ENCODE measurements at regions of chr16 and their contacts with region 1.

Region 1: DNA sequence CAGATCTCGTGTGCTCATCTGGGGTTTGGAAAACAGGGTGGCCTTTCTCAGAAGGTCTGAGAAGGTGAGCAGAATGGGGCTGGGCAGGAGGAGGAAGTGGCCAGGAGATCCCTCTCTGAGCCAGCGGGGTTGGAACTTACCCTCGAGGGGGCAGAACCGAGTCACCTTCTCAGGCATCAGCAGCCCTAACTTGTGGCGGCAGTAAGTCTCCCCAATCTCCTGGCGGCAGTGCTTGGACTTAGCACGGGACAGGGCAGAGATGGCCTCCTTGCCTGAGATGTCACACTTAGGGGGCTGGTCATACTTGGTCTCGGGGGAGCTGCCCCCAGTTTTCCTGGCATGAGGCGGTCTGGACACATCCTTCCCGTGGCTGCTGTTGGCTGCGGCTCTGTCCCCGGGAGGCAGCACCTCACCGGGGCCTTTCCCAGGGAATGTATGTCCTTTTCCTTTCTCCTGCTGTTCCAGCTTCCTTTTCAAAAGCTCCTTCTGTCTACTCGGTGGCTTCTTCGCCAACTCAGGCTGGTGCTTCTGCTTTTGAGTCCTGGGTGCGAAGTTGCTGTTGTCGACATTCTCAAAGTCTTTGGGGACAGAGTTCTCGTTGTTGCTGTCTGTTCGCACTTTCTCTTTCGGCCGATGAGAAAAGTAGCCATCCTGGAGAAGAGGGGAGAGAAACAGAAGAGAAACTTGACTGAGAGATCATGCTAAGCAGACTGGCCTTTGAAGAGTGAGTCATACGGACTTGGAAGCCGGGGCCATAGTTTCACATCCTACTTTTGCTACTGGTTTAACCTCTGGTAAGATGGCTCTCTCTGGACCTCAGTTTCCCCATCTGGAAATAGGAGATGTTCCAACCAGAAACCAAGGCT is 211.7 kb downstream of the XYLT1 start:
- DNase-seq: peak; percentile 87 to 97 (median 96)
- H3K4me3 ChIP-seq: peak overlapping the region; percentile 6 to 68 (median 33)
- H3K4me3 Mint-ChIP-seq: peak overlapping the region; percentile 86 to 90
- H3K27ac ChIP-seq: peak overlapping the region; percentile 98
- H3K27ac Mint-ChIP-seq: peak overlapping the region; percentile 93 to 100 (median 98)
- H3K4me1 ChIP-seq: peaks cover 39 to 42% of the 10 kb centered on the region in 2 donors
- H3K4me1 Mint-ChIP-seq: peaks cover 49% of the 10 kb centered on the region
- H3K27me3 ChIP-seq: no peaks in the 10 kb centered on the region
- H3K27me3 Mint-ChIP-seq: no peaks in the 10 kb centered on the region
- CTCF ChIP-seq: peak; percentile 67

Region 2: GRCh38 chr16:17296431-17296830 is 37.4 kb after region 1 on chr16:
- intact Hi-C with region 1: loop called (anchors 5 kb)
- DNase-seq: no peak
- H3K4me3 ChIP-seq: no peak overlapping the region
- H3K4me3 Mint-ChIP-seq: no peak overlapping the region
- H3K27ac ChIP-seq: no peak overlapping the region
- H3K27ac Mint-ChIP-seq: peak overlapping the region in 1 of 7 donors; percentile 56
- H3K4me1 ChIP-seq: peaks cover 20 to 23% of the 10 kb centered on the region in 2 donors
- H3K4me1 Mint-ChIP-seq: peaks cover 31% of the 10 kb centered on the region
- H3K27me3 ChIP-seq: no peaks in the 10 kb centered on the region
- H3K27me3 Mint-ChIP-seq: peaks cover 0 to 1% (median 0%) of the 10 kb centered on the region in 3 donors
- CTCF ChIP-seq: no peak

Region 3: DNA sequence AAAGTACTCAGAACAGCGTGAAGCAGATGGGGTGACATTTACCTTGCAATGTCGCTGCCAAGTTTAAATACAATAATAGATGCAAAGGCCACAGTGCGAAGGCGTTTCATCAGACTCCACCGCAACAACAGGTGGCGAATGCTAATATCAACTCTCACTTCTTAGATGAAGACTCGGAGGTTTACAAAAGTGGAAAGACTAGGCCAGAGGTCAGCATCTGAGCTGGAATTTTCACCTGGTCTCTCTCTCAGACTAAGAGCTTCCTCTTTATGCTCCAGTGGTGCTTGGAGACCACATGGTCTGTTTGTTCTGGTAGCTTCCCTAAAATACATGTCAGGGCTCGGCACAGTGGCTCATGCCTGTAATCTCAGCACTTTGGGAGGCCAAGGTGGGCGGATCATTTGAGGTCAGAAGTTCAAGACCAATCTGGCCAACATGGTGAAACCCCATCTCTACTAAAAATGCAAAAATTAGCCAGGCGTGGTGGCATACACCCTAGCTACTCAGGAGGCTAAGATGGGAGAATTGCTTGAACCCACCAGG is 42.6 kb after region 1 on chr16:
- intact Hi-C with region 1: loop called (anchors 5 kb)
- DNase-seq: peak; percentile 62 to 78 (median 77)
- H3K4me3 ChIP-seq: no peak overlapping the region
- H3K4me3 Mint-ChIP-seq: peak overlapping the region in 1 of 2 donors; percentile 53
- H3K27ac ChIP-seq: peak overlapping the region; percentile 50 to 75
- H3K27ac Mint-ChIP-seq: peak overlapping the region; percentile 79 to 92 (median 90)
- H3K4me1 ChIP-seq: peaks cover 26 to 34% of the 10 kb centered on the region in 2 donors
- H3K4me1 Mint-ChIP-seq: peaks cover 35% of the 10 kb centered on the region
- H3K27me3 ChIP-seq: no peaks in the 10 kb centered on the region
- H3K27me3 Mint-ChIP-seq: no peaks in the 10 kb centered on the region
- CTCF ChIP-seq: no peak

Region 4: GRCh38 chr16:17321824-17322223 is 62.7 kb after region 1 on chr16:
- intact Hi-C with region 1: loop called in 1 of 2 experiments (anchors 5 kb)
- DNase-seq: peak; percentile 82 to 91 (median 86)
- H3K4me3 ChIP-seq: peak overlapping the region in 1 of 3 experiments; percentile 21
- H3K4me3 Mint-ChIP-seq: peak overlapping the region in 1 of 2 donors; percentile 51
- H3K27ac ChIP-seq: peak overlapping the region; percentile 63 to 89
- H3K27ac Mint-ChIP-seq: peak overlapping the region; percentile 90 to 96 (median 94)
- H3K4me1 ChIP-seq: peaks cover 66 to 71% of the 10 kb centered on the region in 2 donors
- H3K4me1 Mint-ChIP-seq: peaks cover 69% of the 10 kb centered on the region
- H3K27me3 ChIP-seq: no peaks in the 10 kb centered on the region
- H3K27me3 Mint-ChIP-seq: peaks cover 0 to 3% (median 3%) of the 10 kb centered on the region in 3 donors
- CTCF ChIP-seq: no peak

Region 5: GRCh38 chr16:17448640-17449638 is 189.9 kb after region 1 on chr16:
- intact Hi-C with region 1: loop called in 1 of 2 experiments (anchors 5 kb)
- DNase-seq: peak; percentile 86 to 95 (median 93)
- H3K4me3 ChIP-seq: peak overlapping the region in 1 of 3 experiments; percentile 44
- H3K4me3 Mint-ChIP-seq: peak overlapping the region; percentile 31 to 69
- H3K27ac ChIP-seq: peak overlapping the region; percentile 79 to 96
- H3K27ac Mint-ChIP-seq: peak overlapping the region; percentile 94 to 98 (median 96)
- H3K4me1 ChIP-seq: peaks cover 63 to 67% of the 10 kb centered on the region in 2 donors
- H3K4me1 Mint-ChIP-seq: peaks cover 62% of the 10 kb centered on the region
- H3K27me3 ChIP-seq: no peaks in the 10 kb centered on the region
- H3K27me3 Mint-ChIP-seq: peaks cover 0 to 3% (median 2%) of the 10 kb centered on the region in 3 donors
- CTCF ChIP-seq: no peak

Region 6: DNA sequence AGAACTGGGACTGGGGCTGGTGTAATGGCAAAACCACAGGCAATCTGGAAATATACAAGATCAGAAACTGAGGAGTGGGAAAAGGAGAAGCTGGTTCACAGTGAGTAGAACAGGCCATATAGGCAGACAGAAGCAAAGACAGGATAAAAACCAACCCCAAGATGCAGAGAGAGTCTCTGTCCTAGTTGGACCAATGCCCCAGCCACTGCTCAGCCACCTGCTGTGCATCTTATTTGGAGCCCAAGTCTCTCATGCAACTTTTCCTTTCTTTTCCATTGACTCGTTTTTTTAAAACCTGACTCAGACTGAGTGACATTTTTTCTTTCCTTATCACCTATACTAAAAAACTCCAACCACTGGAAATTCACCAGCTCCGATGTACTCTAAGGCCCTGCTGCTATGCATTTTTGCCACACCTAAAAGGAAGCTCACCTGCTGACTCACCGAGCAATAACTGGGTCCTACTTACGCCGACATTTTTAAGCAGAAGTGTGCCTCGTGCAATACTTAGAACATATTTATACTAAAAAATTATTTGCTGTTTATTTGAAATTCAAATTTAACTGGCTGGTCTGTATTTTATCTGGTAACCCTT is 312.5 kb after region 1 on chr16:
- intact Hi-C with region 1: no loop called
- DNase-seq: no peak
- H3K4me3 ChIP-seq: no peak overlapping the region
- H3K4me3 Mint-ChIP-seq: no peak overlapping the region
- H3K27ac ChIP-seq: no peak overlapping the region
- H3K27ac Mint-ChIP-seq: no peak overlapping the region
- H3K4me1 ChIP-seq: no peaks in the 10 kb centered on the region
- H3K4me1 Mint-ChIP-seq: no peaks in the 10 kb centered on the region
- H3K27me3 ChIP-seq: no peaks in the 10 kb centered on the region
- H3K27me3 Mint-ChIP-seq: peaks cover 4 to 7% (median 4%) of the 10 kb centered on the region in 3 donors
- CTCF ChIP-seq: no peak

Measured in CD14-positive monocyte (primary cell).